Dendritic cell treated with granulocyte-macrophage colony-stimulating factor and Interleukin-4, amounts not matched to agents 40 ng/mL and 50 ng/mL, for 4 days (primary cell): ENCODE measurements at regions of chr5 and their contacts with region 1.

Region 1: GRCh38 chr5:114449860-114450421 is 88.1 kb downstream of the KCNN2 start:
- H3K4me3 Mint-ChIP-seq: no peak overlapping the region
- H3K27ac Mint-ChIP-seq: no peak overlapping the region
- H3K4me1 Mint-ChIP-seq: peaks cover 5% of the 10 kb centered on the region
- H3K27me3 Mint-ChIP-seq: peaks cover 3% of the 10 kb centered on the region

Region 2: GRCh38 chr5:112833971-112834370 is 1616.0 kb before region 1 on chr5:
- intact Hi-C with region 1: no loop called
- H3K4me3 Mint-ChIP-seq: no peak overlapping the region
- H3K27ac Mint-ChIP-seq: no peak overlapping the region
- H3K4me1 Mint-ChIP-seq: no peaks in the 10 kb centered on the region
- H3K27me3 Mint-ChIP-seq: no peaks in the 10 kb centered on the region

Region 3: DNA sequence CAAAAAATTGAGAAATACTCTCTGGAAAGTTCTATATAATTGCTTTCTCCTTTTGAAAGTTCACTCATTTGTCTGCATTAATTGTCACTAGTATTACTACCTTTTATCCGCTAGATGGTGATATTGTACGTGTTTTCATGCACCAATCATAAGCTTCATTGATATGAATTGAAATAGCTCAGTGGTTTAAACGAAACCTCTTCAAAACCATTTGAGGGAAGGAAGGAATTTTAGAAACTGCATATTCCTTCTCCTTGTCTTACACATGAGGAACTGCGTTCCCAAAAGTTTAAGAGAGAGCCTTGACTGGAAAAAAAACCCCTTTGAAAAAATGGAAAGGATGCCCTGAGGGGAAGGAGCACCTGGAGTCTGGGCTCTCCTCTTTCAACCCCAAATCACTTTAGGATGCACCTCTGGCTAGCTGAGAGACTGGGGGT is 837.9 kb before region 1 on chr5:
- intact Hi-C with region 1: loop called (anchors 1 kb)
- H3K4me3 Mint-ChIP-seq: no peak overlapping the region
- H3K27ac Mint-ChIP-seq: no peak overlapping the region
- H3K4me1 Mint-ChIP-seq: peaks cover 8% of the 10 kb centered on the region
- H3K27me3 Mint-ChIP-seq: peaks cover 8% of the 10 kb centered on the region

Region 4: GRCh38 chr5:113678924-113679575 is 770.9 kb before region 1 on chr5:
- intact Hi-C with region 1: loop called (anchors 1 kb)
- H3K4me3 Mint-ChIP-seq: no peak overlapping the region
- H3K27ac Mint-ChIP-seq: no peak overlapping the region
- H3K4me1 Mint-ChIP-seq: no peaks in the 10 kb centered on the region
- H3K27me3 Mint-ChIP-seq: no peaks in the 10 kb centered on the region

Region 5: GRCh38 chr5:114101153-114101552 is 348.8 kb before region 1 on chr5:
- intact Hi-C with region 1: loop called (anchors 2 kb)
- H3K4me3 Mint-ChIP-seq: no peak overlapping the region
- H3K27ac Mint-ChIP-seq: no peak overlapping the region
- H3K4me1 Mint-ChIP-seq: no peaks in the 10 kb centered on the region
- H3K27me3 Mint-ChIP-seq: no peaks in the 10 kb centered on the region

Region 6: GRCh38 chr5:114266374-114266773 is 183.6 kb before region 1 on chr5:
- intact Hi-C with region 1: no loop called
- H3K4me3 Mint-ChIP-seq: no peak overlapping the region
- H3K27ac Mint-ChIP-seq: no peak overlapping the region
- H3K4me1 Mint-ChIP-seq: no peaks in the 10 kb centered on the region
- H3K27me3 Mint-ChIP-seq: no peaks in the 10 kb centered on the region

Region 7: GRCh38 chr5:114369680-114370417 is 80.1 kb before region 1 on chr5:
- intact Hi-C with region 1: loop called (anchors 10 kb)
- H3K4me3 Mint-ChIP-seq: no peak overlapping the region
- H3K27ac Mint-ChIP-seq: no peak overlapping the region
- H3K4me1 Mint-ChIP-seq: no peaks in the 10 kb centered on the region
- H3K27me3 Mint-ChIP-seq: peaks cover 4% of the 10 kb centered on the region

Region 8: GRCh38 chr5:114839360-114839759 is 389.4 kb after region 1 on chr5:
- intact Hi-C with region 1: no loop called
- H3K4me3 Mint-ChIP-seq: no peak overlapping the region
- H3K27ac Mint-ChIP-seq: no peak overlapping the region
- H3K4me1 Mint-ChIP-seq: no peaks in the 10 kb centered on the region
- H3K27me3 Mint-ChIP-seq: no peaks in the 10 kb centered on the region